ENCODE measurements at regions of chr2 and their contacts with region 1.

Region 1: DNA sequence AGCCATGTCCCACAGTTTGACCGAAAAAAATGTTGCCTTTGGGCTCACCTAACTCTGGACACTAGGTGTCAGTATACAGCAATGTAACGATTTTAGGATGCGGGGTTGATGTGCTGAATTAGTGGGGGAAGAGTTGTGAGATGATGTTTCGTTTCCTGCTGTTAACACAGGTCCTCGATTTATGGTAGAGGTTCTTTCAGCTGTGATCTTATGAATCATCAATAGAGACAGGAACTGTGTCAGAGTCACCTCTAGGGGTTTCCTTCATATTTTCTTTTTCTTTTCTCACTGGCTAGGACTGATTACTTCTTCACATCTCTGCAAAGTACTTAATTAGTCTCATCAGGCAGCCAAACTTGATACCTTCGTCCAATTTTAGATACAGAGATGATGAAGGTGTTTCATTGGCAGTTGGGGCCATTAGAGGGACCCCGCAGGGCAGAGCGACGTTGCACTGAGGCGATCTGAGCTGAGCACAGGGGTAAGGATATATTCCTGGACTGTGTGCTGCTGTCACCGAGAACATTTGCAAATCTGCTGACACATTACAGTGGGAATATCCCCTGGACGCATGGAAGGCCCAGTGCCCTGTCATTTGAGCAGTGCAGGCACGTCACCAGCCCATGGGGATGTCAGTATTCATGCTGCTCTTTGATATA is 10.2 kb upstream of the MMADHC start:
- DNase-seq: peak; percentile 56
- H3K4me3 Mint-ChIP-seq: peak overlapping the region; percentile 12
- H3K27ac Mint-ChIP-seq: peak overlapping the region; percentile 36
- H3K4me1 Mint-ChIP-seq: peaks cover 18% of the 10 kb centered on the region
- H3K27me3 Mint-ChIP-seq: peaks cover 12% of the 10 kb centered on the region

Region 2: GRCh38 chr2:149587220-149587949 is 10.4 kb before region 1 on chr2 and contains the start of gene MMADHC:
- CTCF ChIA-PET with region 1: interaction called, 15 read pairs
- POLR2A ChIA-PET with region 1: interaction called, 3 read pairs
- intact Hi-C with region 1: loop called (anchors 1 kb)
- DNase-seq: peak; percentile 96
- H3K4me3 Mint-ChIP-seq: peak within 1 kb of the TSS; percentile 98
- H3K27ac Mint-ChIP-seq: peak within 1 kb of the TSS; percentile 97
- H3K4me1 Mint-ChIP-seq: peaks cover 42% of the 10 kb centered on the region
- H3K27me3 Mint-ChIP-seq: peaks cover 11% of the 10 kb centered on the region
- total RNA-seq, gene MMADHC: 130 to 132 TPM

Region 3: DNA sequence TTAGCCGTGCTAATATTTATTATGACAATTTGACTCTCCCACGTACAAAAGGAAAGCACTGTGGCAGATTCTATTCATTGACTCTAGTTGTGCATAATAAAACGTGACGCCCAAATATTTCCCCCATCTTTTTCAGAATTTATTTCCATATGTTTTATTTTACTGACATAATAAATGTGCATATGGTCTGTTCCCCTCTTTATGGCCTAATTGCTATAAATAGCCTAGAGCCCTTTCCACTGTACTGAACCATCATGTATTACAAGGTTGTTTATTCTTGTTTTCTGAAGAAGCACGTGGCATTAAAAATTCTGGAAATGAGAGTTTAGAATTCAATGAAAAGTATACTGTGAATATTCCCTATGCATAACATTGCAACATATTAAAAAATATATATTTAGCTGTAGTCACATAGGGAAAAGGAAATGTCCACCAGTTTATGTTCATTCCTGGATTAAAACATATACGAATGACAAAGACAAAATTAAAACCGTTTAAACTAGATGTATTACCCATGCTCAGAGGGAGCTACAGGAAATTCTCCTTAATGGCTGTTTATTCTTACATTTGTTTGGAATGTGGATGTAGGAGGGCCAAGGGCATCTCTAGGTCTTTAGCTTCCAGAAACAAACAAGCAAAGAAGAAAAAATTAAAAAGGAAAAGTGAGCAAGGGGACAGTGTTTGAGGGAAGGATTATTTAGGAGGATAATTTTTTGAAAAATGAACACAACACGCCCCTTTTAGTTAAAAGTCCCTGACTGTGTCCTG is 111.9 kb after region 1 on chr2:
- CTCF ChIA-PET with region 1: no interaction called
- POLR2A ChIA-PET with region 1: no interaction called
- intact Hi-C with region 1: no loop called
- DNase-seq: no peak
- H3K4me3 Mint-ChIP-seq: no peak overlapping the region
- H3K27ac Mint-ChIP-seq: no peak overlapping the region
- H3K4me1 Mint-ChIP-seq: no peaks in the 10 kb centered on the region
- H3K27me3 Mint-ChIP-seq: no peaks in the 10 kb centered on the region

Region 4: DNA sequence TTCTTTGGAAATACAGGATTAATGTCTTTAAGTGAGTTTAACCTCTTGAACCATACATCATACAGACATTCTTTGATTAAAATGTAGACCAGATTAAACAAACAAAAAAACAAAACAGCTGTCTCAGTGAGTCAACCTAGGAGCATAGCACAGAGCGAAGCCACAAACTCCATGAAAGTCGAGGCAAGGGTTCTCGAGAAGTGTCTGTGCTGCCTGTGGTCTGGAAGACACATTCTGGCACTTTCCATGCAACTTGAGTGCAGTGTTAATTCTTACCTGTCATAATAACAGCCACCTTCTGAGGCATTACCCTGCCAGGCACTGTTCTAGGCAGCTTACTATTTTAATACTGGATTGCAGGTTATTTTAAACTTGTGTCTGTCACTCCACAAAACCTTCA is 425.2 kb after region 1 on chr2:
- CTCF ChIA-PET with region 1: interaction called, 3 read pairs
- POLR2A ChIA-PET with region 1: no interaction called
- intact Hi-C with region 1: loop called (anchors 10 kb)
- DNase-seq: peak; percentile 40
- H3K4me3 Mint-ChIP-seq: no peak overlapping the region
- H3K27ac Mint-ChIP-seq: no peak overlapping the region
- H3K4me1 Mint-ChIP-seq: no peaks in the 10 kb centered on the region
- H3K27me3 Mint-ChIP-seq: no peaks in the 10 kb centered on the region

Region 5: DNA sequence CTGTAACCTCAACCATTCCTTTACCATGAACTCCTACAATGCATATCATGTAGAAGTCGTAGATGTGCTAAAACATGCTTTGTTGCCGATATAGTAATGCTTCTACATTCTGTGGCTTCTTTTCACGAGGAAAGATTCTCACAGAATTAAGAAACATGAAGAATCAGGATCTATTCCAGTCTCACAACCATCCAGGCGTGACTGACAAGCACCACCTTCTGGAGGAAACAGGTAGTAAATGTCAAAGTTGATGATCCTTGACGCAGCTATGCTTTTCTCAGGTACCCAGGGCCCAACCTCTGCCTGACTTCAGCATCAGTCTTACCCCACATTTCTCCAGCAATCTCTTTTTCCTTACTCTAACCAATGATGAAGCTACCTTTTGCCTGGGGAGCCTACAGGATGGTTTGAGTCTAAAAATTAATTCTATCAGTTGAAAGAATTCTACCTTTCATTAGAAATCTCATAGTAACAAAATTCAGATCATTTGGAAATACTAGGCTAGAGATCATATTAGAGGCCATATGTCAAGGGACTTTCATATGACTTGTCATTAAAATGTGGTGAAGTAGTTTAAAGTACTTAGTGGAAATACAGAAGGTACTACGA is 1013.0 kb after region 1 on chr2:
- CTCF ChIA-PET with region 1: interaction called, 3 read pairs
- POLR2A ChIA-PET with region 1: no interaction called
- intact Hi-C with region 1: loop called (anchors 2 kb)
- DNase-seq: no peak
- H3K4me3 Mint-ChIP-seq: no peak overlapping the region
- H3K27ac Mint-ChIP-seq: no peak overlapping the region
- H3K4me1 Mint-ChIP-seq: no peaks in the 10 kb centered on the region
- H3K27me3 Mint-ChIP-seq: peaks cover 1% of the 10 kb centered on the region

Region 6: DNA sequence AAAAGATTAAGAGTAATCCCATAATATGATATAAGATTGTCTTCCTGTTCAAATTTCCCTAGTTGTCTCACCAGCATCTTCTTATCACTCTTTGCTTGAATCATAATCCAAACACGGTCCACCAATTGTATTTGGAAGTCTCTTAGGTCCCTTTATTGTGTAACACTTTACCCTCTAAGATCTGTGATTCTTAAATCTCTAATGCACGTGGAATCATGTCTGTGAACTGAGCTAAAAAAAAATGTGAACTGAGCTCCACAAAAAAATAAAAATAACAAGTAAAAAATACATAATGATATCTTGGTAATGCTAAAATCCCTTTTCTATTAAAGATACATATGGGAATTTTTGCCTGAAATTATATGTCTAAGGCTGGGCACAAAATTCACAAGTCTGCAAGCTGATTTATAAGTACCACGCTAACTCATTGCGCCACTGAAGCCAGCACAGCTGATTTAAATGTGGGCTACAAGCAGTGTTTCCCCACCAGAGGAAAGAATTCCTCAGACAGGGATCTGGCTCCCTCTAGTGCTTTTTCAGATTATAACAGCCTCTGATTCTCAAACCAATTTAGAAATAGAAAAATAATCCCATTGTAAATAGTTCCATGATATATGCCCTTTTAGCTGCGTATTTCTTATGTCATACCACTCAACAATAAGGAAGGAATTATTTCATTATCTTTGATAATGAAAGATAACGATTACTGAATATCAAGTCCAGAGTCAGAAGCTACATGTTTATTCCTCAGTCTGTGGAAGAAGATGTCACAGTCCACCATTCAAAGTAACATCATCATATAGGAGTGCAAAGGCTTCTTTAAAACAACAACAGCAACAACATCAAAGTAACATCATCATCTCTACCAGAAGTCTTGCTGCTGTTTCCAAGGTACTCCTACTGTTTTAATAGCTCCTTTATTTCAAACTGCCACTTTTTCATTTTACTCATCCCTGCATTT is 1641.0 kb after region 1 on chr2:
- CTCF ChIA-PET with region 1: interaction called, 44 read pairs
- POLR2A ChIA-PET with region 1: no interaction called
- intact Hi-C with region 1: loop called (anchors 1 kb)
- DNase-seq: peak; percentile 48
- H3K4me3 Mint-ChIP-seq: no peak overlapping the region
- H3K27ac Mint-ChIP-seq: no peak overlapping the region
- H3K4me1 Mint-ChIP-seq: no peaks in the 10 kb centered on the region
- H3K27me3 Mint-ChIP-seq: no peaks in the 10 kb centered on the region

Measured in activated CD4-positive, alpha-beta memory T cell treated with anti-CD3 and anti-CD28 coated beads for 36 hours (primary cell).